Activated CD4-positive, alpha-beta T cell treated with anti-CD3 and anti-CD28 coated beads, Interleukin-2, amount 10 ng/mL, durations not matched to agents 7 days and 5 days (primary cell): ENCODE measurements at regions of chr3 and their contacts with region 1.

Region 1: GRCh38 chr3:48770187-48770502 is 53.1 kb upstream of the IP6K2 start:
- DNase-seq: no peak
- H3K4me3 Mint-ChIP-seq: no peak overlapping the region
- H3K27ac Mint-ChIP-seq: no peak overlapping the region
- H3K4me1 Mint-ChIP-seq: no peaks in the 10 kb centered on the region
- H3K27me3 Mint-ChIP-seq: no peaks in the 10 kb centered on the region

Region 2: DNA sequence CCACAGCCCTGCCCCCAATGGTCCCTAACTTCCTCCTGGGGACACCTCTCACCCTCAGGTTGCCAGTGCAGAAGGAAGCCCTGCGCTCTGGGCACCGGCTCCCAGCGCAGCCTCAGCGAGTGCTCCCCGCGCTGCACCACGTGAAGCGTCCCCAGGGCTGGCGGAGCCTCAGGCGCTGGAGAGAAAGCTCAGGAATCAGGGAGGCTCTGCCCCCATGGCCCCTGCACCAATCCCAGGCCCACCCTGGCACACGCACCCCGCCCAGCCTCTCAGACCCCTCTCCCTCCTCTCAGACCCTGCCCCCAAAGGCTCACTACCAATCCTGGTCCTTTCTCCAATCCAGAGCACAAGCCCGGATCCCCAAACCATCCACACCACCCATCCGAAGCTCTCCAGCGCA is 181.9 kb before region 1 on chr3:
- CTCF ChIA-PET with region 1: no interaction called
- POLR2A ChIA-PET with region 1: no interaction called
- DNase-seq: no peak
- H3K4me3 Mint-ChIP-seq: no peak overlapping the region
- H3K27ac Mint-ChIP-seq: no peak overlapping the region
- H3K4me1 Mint-ChIP-seq: no peaks in the 10 kb centered on the region
- H3K27me3 Mint-ChIP-seq: peaks cover 2% of the 10 kb centered on the region

Region 3: GRCh38 chr3:48784426-48785120 is 14.4 kb after region 1 on chr3:
- CTCF ChIA-PET with region 1: interaction called, 12 read pairs
- POLR2A ChIA-PET with region 1: no interaction called
- DNase-seq: no peak
- H3K4me3 Mint-ChIP-seq: no peak overlapping the region
- H3K27ac Mint-ChIP-seq: no peak overlapping the region
- H3K4me1 Mint-ChIP-seq: peaks cover 13% of the 10 kb centered on the region
- H3K27me3 Mint-ChIP-seq: no peaks in the 10 kb centered on the region

Region 4: GRCh38 chr3:49673715-49674496 is 903.8 kb after region 1 on chr3 and contains the start of gene APEH:
- CTCF ChIA-PET with region 1: no interaction called
- POLR2A ChIA-PET with region 1: no interaction called
- DNase-seq: peak; percentile 98
- H3K4me3 Mint-ChIP-seq: peak within 1 kb of the TSS; percentile 84
- H3K27ac Mint-ChIP-seq: peak within 1 kb of the TSS; percentile 99
- H3K4me1 Mint-ChIP-seq: peaks cover 37% of the 10 kb centered on the region
- H3K27me3 Mint-ChIP-seq: no peaks in the 10 kb centered on the region
- total RNA-seq, gene APEH: 137 TPM